Caco-2 (cell line): ENCODE measurements at regions of chr2 and their contacts with region 1.

Region 1: GRCh38 chr2:72887754-72888437 is 688 bp downstream of the SPR start:
- DNase-seq: peak; percentile 93 to 95
- H3K4me3 ChIP-seq: peak overlapping the region; percentile 80
- H3K4me3 Mint-ChIP-seq: peak overlapping the region; percentile 85
- H3K27ac Mint-ChIP-seq: peak overlapping the region; percentile 49
- H3K4me1 ChIP-seq: peaks cover 21% of the 10 kb centered on the region
- H3K4me1 Mint-ChIP-seq: peaks cover 7% of the 10 kb centered on the region
- H3K27me3 ChIP-seq: no peaks in the 10 kb centered on the region
- H3K27me3 Mint-ChIP-seq: no peaks in the 10 kb centered on the region
- CTCF ChIP-seq: peak; percentile 81 to 99

Region 2: GRCh38 chr2:72719416-72719815 is 168.5 kb before region 1 on chr2:
- CTCF ChIA-PET with region 1: no interaction called
- POLR2A ChIA-PET with region 1: no interaction called
- intact Hi-C with region 1: no loop called
- DNase-seq: peak; percentile 55 to 63
- H3K4me3 ChIP-seq: no peak overlapping the region
- H3K4me3 Mint-ChIP-seq: peak overlapping the region; percentile 40
- H3K27ac Mint-ChIP-seq: no peak overlapping the region
- H3K4me1 ChIP-seq: peaks cover 44% of the 10 kb centered on the region
- H3K4me1 Mint-ChIP-seq: peaks cover 26% of the 10 kb centered on the region
- H3K27me3 ChIP-seq: no peaks in the 10 kb centered on the region
- H3K27me3 Mint-ChIP-seq: no peaks in the 10 kb centered on the region
- CTCF ChIP-seq: no peak

Region 3: GRCh38 chr2:72770879-72771461 is 116.9 kb before region 1 on chr2:
- CTCF ChIA-PET with region 1: interaction called, 3 read pairs
- POLR2A ChIA-PET with region 1: no interaction called
- intact Hi-C with region 1: loop called (anchors 1 kb)
- DNase-seq: peak; percentile 71 to 83
- H3K4me3 ChIP-seq: no peak overlapping the region
- H3K4me3 Mint-ChIP-seq: no peak overlapping the region
- H3K27ac Mint-ChIP-seq: no peak overlapping the region
- H3K4me1 ChIP-seq: peaks cover 15% of the 10 kb centered on the region
- H3K4me1 Mint-ChIP-seq: peaks cover 20% of the 10 kb centered on the region
- H3K27me3 ChIP-seq: no peaks in the 10 kb centered on the region
- H3K27me3 Mint-ChIP-seq: no peaks in the 10 kb centered on the region
- CTCF ChIP-seq: peak; percentile 83 to 88

Region 4: DNA sequence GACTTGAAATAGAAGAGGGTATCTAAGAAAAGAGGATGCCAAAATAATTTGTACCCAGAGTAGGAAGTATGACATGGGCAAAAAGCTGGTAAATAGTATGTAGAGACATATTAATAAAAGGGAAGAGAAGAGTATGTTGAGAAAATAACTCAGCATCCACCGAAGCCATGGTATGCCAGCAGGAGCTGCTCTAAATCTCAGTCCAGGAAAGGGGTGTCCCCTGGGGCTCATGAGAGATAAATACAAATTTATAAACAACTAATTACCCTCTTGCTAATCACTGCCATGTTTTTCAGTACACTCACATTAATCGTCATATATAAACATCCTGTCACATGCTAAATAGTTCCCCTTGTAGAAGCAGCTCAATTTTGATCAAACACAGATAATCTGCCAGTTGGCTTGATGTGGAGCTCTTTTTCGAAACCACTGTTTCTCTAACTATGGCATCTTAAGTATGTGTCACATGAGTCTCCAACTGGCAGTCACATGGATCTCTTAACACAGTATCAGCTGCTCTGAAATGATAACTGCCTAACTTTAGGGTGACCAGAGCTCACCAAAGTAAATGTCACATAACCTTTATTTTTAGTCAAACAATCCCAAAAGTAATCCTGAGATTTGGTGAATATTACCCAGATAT is 94.0 kb before region 1 on chr2:
- CTCF ChIA-PET with region 1: no interaction called
- POLR2A ChIA-PET with region 1: no interaction called
- intact Hi-C with region 1: no loop called
- DNase-seq: no peak
- H3K4me3 ChIP-seq: no peak overlapping the region
- H3K4me3 Mint-ChIP-seq: no peak overlapping the region
- H3K27ac Mint-ChIP-seq: no peak overlapping the region
- H3K4me1 ChIP-seq: 0 out of 2 replicates have a peak, but pooled peaks cover 4% of the 10 kb centered on the region
- H3K4me1 Mint-ChIP-seq: peaks cover 14% of the 10 kb centered on the region
- H3K27me3 ChIP-seq: no peaks in the 10 kb centered on the region
- H3K27me3 Mint-ChIP-seq: no peaks in the 10 kb centered on the region
- CTCF ChIP-seq: no peak

Region 5: GRCh38 chr2:72915907-72916742 is 28.2 kb after region 1 on chr2:
- CTCF ChIA-PET with region 1: interaction called, 18 read pairs
- POLR2A ChIA-PET with region 1: no interaction called
- intact Hi-C with region 1: loop called (anchors 1 kb)
- DNase-seq: peak; percentile 84 to 87
- H3K4me3 ChIP-seq: peak overlapping the region; percentile 61
- H3K4me3 Mint-ChIP-seq: peak overlapping the region; percentile 83
- H3K27ac Mint-ChIP-seq: no peak overlapping the region
- H3K4me1 ChIP-seq: peaks cover 19% of the 10 kb centered on the region; the same call in 1 of the 2 replicates
- H3K4me1 Mint-ChIP-seq: no peaks in the 10 kb centered on the region
- H3K27me3 ChIP-seq: peaks cover 4% of the 10 kb centered on the region
- H3K27me3 Mint-ChIP-seq: peaks cover 34% of the 10 kb centered on the region
- CTCF ChIP-seq: no peak

Region 6: GRCh38 chr2:72934683-72935610 is 47.1 kb after region 1 on chr2:
- CTCF ChIA-PET with region 1: interaction called, 62 read pairs
- POLR2A ChIA-PET with region 1: no interaction called
- intact Hi-C with region 1: loop called (anchors 1 kb)
- DNase-seq: peak; percentile 70 to 74
- H3K4me3 ChIP-seq: no peak overlapping the region
- H3K4me3 Mint-ChIP-seq: no peak overlapping the region
- H3K27ac Mint-ChIP-seq: no peak overlapping the region
- H3K4me1 ChIP-seq: 0 out of 2 replicates have a peak, but pooled peaks cover 5% of the 10 kb centered on the region
- H3K4me1 Mint-ChIP-seq: peaks cover 6% of the 10 kb centered on the region
- H3K27me3 ChIP-seq: no peaks in the 10 kb centered on the region; the same call in 1 of the 2 replicates
- H3K27me3 Mint-ChIP-seq: no peaks in the 10 kb centered on the region
- CTCF ChIP-seq: peak; percentile 58 to 60

Region 7: GRCh38 chr2:72973566-72974435 is 85.9 kb after region 1 on chr2:
- CTCF ChIA-PET with region 1: interaction called, 38 read pairs
- POLR2A ChIA-PET with region 1: no interaction called
- intact Hi-C with region 1: loop called (anchors 1 kb)
- DNase-seq: peak; percentile 67 to 72
- H3K4me3 ChIP-seq: no peak overlapping the region
- H3K4me3 Mint-ChIP-seq: no peak overlapping the region
- H3K27ac Mint-ChIP-seq: no peak overlapping the region
- H3K4me1 ChIP-seq: no peaks in the 10 kb centered on the region
- H3K4me1 Mint-ChIP-seq: no peaks in the 10 kb centered on the region
- H3K27me3 ChIP-seq: no peaks in the 10 kb centered on the region
- H3K27me3 Mint-ChIP-seq: no peaks in the 10 kb centered on the region
- CTCF ChIP-seq: peak; percentile 87 to 95

Region 8: GRCh38 chr2:73176881-73177644 is 289.2 kb after region 1 on chr2:
- CTCF ChIA-PET with region 1: interaction called, 31 read pairs
- POLR2A ChIA-PET with region 1: no interaction called
- intact Hi-C with region 1: loop called (anchors 2 kb)
- DNase-seq: peak; percentile 90 to 96
- H3K4me3 ChIP-seq: peak overlapping the region; percentile 76
- H3K4me3 Mint-ChIP-seq: peak overlapping the region; percentile 94
- H3K27ac Mint-ChIP-seq: peak overlapping the region; percentile 87
- H3K4me1 ChIP-seq: peaks cover 28% of the 10 kb centered on the region
- H3K4me1 Mint-ChIP-seq: peaks cover 10% of the 10 kb centered on the region
- H3K27me3 ChIP-seq: no peaks in the 10 kb centered on the region
- H3K27me3 Mint-ChIP-seq: peaks cover 6% of the 10 kb centered on the region
- CTCF ChIP-seq: peak; percentile 99

Region 9: DNA sequence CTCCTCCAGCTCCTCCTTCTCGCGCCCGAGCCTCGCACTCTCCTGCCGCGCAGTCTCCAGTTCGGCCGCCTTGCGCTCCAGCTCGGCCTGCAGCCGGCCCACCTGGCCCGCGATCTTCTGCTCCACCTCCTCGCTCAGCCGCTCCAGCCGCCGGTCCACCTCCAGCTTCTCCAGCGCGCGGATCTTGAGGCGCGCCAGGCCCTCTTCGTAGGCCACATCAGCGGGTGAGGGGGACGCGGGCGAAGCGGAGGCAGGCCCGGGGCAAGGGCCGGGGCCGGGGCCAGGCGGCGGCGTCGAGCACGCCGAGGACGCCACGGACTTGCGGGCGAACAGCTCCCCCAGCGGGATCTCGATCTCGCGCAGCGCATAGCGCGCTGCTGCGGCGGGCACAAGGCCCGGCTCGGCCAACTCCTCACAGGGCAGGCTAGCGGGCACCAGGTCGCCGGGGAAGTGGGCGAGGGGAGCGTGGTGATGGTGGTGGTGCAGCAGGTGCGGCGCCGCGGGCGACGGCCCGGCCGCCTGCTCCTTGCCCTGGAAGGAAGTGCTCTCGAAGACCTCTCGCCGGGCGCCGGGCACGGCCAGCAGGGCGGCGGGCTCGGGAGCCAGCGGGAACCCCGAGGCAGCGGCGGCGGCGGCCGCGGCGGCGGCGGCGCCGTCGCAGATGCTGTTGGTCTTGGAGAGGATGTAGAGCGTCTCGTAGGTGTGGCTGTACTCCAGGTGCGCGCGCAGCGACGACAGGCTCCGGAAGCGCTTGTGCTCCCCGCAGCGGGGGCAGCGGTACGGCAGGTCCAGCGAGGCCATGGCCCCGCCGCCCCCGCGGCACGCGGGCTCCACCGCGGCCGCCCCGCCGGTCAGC is 381.2 kb after region 1 on chr2:
- CTCF ChIA-PET with region 1: no interaction called
- POLR2A ChIA-PET with region 1: no interaction called
- intact Hi-C with region 1: loop called (anchors 5 kb)
- DNase-seq: peak; percentile 90
- H3K4me3 ChIP-seq: peak overlapping the region; percentile 93
- H3K4me3 Mint-ChIP-seq: peak overlapping the region; percentile 72
- H3K27ac Mint-ChIP-seq: peak overlapping the region; percentile 14
- H3K4me1 ChIP-seq: peaks cover 12% of the 10 kb centered on the region; the same call in 1 of the 2 replicates
- H3K4me1 Mint-ChIP-seq: peaks cover 21% of the 10 kb centered on the region
- H3K27me3 ChIP-seq: no peaks in the 10 kb centered on the region
- H3K27me3 Mint-ChIP-seq: no peaks in the 10 kb centered on the region
- CTCF ChIP-seq: peak; percentile 12 to 36

Region 10: DNA sequence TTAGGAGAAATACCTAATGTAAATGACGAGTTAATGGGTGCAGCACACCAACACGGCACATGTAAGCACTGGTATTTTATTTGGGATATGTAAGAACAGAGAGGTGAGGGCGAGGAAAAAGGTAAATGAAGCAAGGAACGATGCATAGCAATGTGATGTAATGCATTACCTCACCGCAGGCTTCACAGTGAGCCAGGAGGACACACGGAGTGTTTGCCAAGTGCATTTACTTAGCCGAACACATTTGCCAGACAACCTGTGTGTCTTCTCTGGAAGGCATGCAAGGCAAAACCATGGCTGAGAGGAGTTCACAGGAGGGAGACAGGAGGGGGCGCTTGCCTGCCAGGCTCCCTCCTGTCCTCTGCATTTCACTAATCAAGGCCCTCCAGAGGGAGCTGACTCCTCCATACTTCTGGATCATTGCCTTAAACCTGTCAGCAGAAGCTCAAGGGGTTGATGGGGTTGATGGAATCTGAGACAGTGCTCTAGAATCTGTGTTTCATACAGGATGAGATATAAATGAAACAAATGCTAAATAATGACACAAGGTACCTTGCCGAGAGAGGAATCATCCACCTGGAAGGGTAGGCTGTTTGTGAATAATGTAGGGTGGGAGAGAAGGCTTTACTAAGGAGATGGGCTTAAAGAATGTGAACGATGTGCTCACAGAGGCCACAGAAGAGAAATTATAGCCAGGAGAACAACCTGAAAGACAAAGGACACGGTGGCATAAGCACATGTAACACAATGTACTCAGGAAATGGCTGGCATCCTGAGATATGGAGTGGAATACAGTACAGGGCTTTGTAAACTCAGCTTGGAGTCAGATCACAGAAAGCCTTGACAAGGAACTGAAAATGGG is 858.4 kb after region 1 on chr2:
- CTCF ChIA-PET with region 1: no interaction called
- POLR2A ChIA-PET with region 1: no interaction called
- intact Hi-C with region 1: no loop called
- DNase-seq: no peak
- H3K4me3 ChIP-seq: no peak overlapping the region
- H3K4me3 Mint-ChIP-seq: no peak overlapping the region
- H3K27ac Mint-ChIP-seq: no peak overlapping the region
- H3K4me1 ChIP-seq: no peaks in the 10 kb centered on the region
- H3K4me1 Mint-ChIP-seq: no peaks in the 10 kb centered on the region
- H3K27me3 ChIP-seq: no peaks in the 10 kb centered on the region
- H3K27me3 Mint-ChIP-seq: no peaks in the 10 kb centered on the region
- CTCF ChIP-seq: no peak